Common myeloid progenitor, CD34-positive (primary cell): ENCODE measurements at regions of chr7 and their contacts with region 1.

Region 1: GRCh38 chr7:75878769-75879611 is at the start of gene RHBDD2:
- DNase-seq: peak; percentile 91 to 94 (median 93)
- H3K4me3 ChIP-seq: peak within 1 kb of the TSS; percentile 62 to 91 (median 83)
- H3K27ac ChIP-seq: peak within 1 kb of the TSS in 1 of 2 experiments; percentile 60
- H3K4me1 ChIP-seq: peaks cover 12 to 23% (median 16%) of the 10 kb centered on the region in 4 experiments
- H3K27me3 ChIP-seq: no peaks in the 10 kb centered on the region

Region 2: DNA sequence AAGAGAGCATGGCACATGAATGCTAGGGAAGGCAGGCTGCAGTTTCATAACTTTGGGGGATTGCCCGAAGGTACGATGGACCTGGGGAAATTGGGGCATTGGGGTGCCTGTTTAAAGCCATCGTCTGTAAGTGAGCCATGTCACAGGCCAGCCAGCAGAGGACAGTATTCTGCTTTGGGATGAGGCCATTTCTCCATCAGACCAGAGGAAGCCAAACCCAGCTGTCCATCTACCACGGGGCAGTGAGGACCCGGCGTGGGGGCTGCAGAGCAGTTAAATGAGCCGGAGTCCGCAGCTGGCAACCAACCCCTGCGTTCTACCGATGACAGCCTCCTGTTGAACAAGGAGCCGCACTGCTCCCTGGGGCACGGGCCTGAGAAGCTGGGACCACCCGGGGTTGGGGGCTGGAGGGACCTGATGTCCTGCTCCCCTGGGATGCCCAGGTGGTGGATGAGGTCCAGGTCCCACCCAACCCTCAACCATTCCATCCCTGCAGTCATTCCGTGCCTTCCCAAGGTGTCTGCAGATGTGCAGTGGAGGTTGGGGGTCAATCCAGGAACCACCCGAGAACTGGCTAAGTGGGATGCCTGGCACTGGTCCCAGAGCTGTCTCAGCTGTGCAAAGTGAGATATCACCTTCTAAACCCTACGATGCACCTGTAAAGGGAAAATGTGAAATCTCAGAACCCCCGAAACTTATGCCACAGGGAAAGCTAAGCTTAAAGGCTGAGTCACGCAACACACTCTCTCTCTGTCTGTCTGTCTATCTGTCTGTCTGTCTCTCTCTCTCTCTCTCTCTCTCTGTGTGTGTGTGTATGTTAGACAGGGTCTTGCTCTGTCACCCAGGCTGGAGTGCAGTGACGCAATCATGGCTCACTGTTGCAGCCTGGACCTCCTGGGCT is 12.3 kb before region 1 on chr7:
- CTCF ChIA-PET with region 1: interaction called, 13 read pairs
- POLR2A ChIA-PET with region 1: no interaction called
- DNase-seq: peak; percentile 59 to 77 (median 73)
- H3K4me3 ChIP-seq: no peak overlapping the region
- H3K27ac ChIP-seq: no peak overlapping the region
- H3K4me1 ChIP-seq: peaks cover 0 to 5% (median 0%) of the 10 kb centered on the region in 4 experiments
- H3K27me3 ChIP-seq: peaks cover 0 to 2% (median 0%) of the 10 kb centered on the region in 5 experiments

Region 3: DNA sequence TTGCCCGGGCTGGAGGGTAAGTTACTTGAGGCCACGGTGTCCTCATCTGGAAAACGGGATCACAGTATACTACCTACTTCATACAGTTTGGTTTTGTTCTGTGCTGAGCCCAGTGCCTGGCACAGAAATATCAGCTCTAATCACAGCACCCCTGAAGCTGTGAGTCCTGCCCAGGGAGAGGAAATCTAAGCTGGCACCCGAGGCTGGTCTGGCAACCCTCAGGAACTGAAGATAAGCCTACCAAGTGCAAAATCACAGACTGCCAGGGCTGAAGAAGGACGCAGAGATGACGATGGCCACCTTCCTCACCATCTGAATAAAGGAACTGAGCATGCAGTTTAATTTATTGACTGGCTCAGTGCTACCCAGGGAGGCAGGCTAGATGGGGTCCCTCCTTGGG is 123.1 kb after region 1 on chr7:
- CTCF ChIA-PET with region 1: no interaction called
- POLR2A ChIA-PET with region 1: no interaction called
- DNase-seq: no peak
- H3K4me3 ChIP-seq: no peak overlapping the region
- H3K27ac ChIP-seq: no peak overlapping the region
- H3K4me1 ChIP-seq: peaks cover 0 to 4% (median 0%) of the 10 kb centered on the region in 4 experiments
- H3K27me3 ChIP-seq: peaks cover 0 to 18% (median 0%) of the 10 kb centered on the region in 5 experiments